CD8-positive, alpha-beta T cell (primary cell): ENCODE measurements at regions of chr1 and their contacts with region 1.

Region 1: DNA sequence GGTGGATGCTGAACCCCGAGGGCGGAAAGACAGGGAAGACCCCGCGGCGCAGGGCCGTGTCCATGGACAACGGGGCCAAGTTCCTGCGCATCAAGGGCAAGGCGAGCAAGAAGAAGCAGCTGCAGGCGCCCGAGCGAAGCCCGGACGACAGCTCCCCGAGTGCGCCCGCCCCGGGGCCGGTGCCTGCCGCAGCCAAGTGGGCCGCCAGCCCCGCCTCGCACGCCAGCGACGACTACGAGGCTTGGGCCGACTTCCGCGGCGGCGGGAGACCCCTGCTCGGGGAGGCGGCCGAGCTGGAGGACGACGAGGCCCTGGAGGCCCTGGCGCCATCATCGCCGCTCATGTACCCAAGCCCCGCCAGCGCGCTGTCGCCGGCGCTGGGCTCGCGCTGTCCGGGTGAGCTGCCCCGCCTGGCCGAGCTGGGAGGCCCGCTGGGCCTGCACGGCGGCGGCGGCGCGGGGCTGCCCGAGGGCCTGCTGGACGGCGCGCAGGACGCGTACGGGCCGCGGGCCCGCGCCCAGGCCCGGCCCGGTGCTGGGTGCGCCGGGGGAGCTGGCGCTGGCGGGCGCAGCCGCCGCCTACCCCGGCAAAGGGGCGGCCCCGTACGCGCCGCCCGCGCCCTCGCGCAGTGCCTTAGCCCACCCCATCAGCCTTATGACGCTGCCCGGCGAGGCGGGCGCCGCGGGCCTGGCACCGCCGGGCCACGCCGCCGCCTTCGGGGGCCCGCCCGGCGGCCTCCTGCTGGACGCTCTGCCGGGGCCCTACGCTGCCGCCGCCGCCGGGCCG is 20.7 kb downstream of the FOXO6 start:
- DNase-seq: peak in 7 of 9 experiments; percentile 24 to 74 (median 57)
- ATAC-seq: peak; percentile 79
- H3K4me3 ChIP-seq: peak overlapping the region; percentile 24 to 46
- H3K4me3 Mint-ChIP-seq: peak overlapping the region; percentile 82
- H3K27ac ChIP-seq: no peak overlapping the region
- H3K27ac Mint-ChIP-seq: no peak overlapping the region
- H3K4me1 ChIP-seq: peaks cover 23% of the 10 kb centered on the region
- H3K4me1 Mint-ChIP-seq: peaks cover 20% of the 10 kb centered on the region
- H3K27me3 ChIP-seq: peaks cover 6 to 22% of the 10 kb centered on the region in 2 experiments
- H3K27me3 Mint-ChIP-seq: peaks cover 62% of the 10 kb centered on the region
- CTCF ChIP-seq: no peak

Region 2: DNA sequence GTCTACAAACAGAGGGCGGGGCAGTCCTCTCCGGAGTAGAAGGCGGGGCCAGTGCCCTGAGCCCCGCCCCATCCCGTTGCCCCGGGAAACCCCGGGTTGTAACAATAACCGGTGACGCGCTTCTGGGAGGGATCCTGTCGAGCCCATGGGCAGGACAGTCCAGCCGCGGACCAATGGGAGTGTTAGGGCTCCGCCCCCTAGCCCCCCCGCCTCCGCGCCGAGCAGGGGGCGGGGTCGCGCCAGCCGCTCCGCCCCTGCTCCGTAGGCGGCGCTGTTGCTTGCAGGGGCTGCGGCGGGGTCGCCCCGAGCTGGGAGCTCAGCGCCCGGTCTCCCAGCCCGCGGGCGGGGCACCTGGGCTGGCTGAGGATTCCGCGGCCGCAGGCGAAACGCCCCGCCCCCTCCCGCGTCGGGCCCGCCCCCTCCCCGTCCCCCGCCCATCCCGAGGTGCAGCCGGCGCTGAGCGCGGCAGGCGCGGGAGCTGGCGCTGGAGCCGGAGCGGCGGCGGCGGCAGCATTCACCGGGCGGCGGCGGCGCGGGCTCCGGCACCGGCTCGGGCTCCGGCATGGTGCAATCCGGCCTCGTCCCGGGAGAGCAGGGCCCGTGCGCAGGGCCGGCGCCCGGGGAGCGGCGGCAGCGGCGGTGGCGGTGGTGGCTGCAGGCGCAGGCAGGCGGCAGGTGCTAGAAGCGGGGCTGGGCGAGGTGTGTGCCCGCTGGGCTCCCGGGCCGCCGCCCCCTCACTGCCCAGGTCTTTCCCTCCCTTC is 20.7 kb before region 1 on chr1 and contains the start of gene FOXO6:
- CTCF ChIA-PET with region 1: no interaction called
- POLR2A ChIA-PET with region 1: no interaction called
- intact Hi-C with region 1: loop called (anchors 1 kb)
- DNase-seq: peak; percentile 85 to 97 (median 94)
- ATAC-seq: peak; percentile 90
- H3K4me3 ChIP-seq: peak within 1 kb of the TSS; percentile 35 to 52
- H3K4me3 Mint-ChIP-seq: peak within 1 kb of the TSS; percentile 82
- H3K27ac ChIP-seq: peak within 1 kb of the TSS; percentile 14 to 25
- H3K27ac Mint-ChIP-seq: peak within 1 kb of the TSS; percentile 28
- H3K4me1 ChIP-seq: peaks cover 22% of the 10 kb centered on the region
- H3K4me1 Mint-ChIP-seq: peaks cover 23% of the 10 kb centered on the region
- H3K27me3 ChIP-seq: peaks cover 10 to 11% of the 10 kb centered on the region in 2 experiments
- H3K27me3 Mint-ChIP-seq: peaks cover 29% of the 10 kb centered on the region
- CTCF ChIP-seq: no peak
- total RNA-seq, gene FOXO6: 1.4 to 1.7 TPM

Region 3: GRCh38 chr1:41404308-41404761 is 22.4 kb after region 1 on chr1:
- CTCF ChIA-PET with region 1: no interaction called
- POLR2A ChIA-PET with region 1: no interaction called
- intact Hi-C with region 1: no loop called
- DNase-seq: peak in 5 of 9 experiments; percentile 14 to 50 (median 37)
- ATAC-seq: peak; percentile 58
- H3K4me3 ChIP-seq: no peak overlapping the region
- H3K4me3 Mint-ChIP-seq: no peak overlapping the region
- H3K27ac ChIP-seq: no peak overlapping the region
- H3K27ac Mint-ChIP-seq: no peak overlapping the region
- H3K4me1 ChIP-seq: peaks cover 5% of the 10 kb centered on the region
- H3K4me1 Mint-ChIP-seq: no peaks in the 10 kb centered on the region
- H3K27me3 ChIP-seq: no peaks in the 10 kb centered on the region
- H3K27me3 Mint-ChIP-seq: peaks cover 31% of the 10 kb centered on the region
- CTCF ChIP-seq: no peak

Region 4: DNA sequence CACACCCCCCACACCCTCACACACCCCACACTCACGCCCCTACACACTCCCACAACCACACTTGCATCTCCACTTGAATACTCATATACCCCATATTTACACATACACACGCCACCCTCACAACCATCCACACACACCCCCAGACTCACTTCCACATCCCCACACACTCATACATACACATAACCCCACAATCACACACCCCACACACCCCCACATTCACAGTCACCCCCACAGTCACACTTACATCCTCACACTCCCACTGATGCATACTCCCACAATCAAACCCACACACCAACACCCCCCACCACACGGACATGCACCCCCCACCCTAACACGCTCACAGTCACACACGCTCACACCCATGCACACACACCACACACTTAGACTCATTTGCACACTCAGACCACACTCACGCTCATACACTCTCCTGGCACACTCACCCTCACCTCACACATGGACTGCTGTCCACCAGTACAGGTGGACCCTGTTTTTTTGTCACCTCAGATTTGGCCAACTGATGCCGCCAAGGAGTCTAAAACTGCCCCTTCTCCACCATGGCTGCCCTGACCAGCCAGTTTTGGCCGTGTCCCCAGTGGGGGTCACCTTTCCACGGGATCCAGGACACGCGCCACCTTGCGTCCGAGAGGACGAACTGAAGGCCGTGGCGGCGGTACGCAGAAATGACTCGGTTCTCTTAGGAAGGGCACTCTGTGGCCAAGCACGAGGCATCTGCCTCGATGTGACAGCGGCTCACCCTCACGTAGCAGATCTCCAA is 147.9 kb after region 1 on chr1:
- CTCF ChIA-PET with region 1: no interaction called
- POLR2A ChIA-PET with region 1: no interaction called
- intact Hi-C with region 1: no loop called
- DNase-seq: no peak
- ATAC-seq: no peak
- H3K4me3 ChIP-seq: no peak overlapping the region
- H3K4me3 Mint-ChIP-seq: no peak overlapping the region
- H3K27ac ChIP-seq: no peak overlapping the region
- H3K27ac Mint-ChIP-seq: peak overlapping the region; percentile 71
- H3K4me1 ChIP-seq: no peaks in the 10 kb centered on the region
- H3K4me1 Mint-ChIP-seq: no peaks in the 10 kb centered on the region
- H3K27me3 ChIP-seq: no peaks in the 10 kb centered on the region
- H3K27me3 Mint-ChIP-seq: no peaks in the 10 kb centered on the region
- CTCF ChIP-seq: no peak